ENCODE measurements at regions of chr1 and their contacts with region 1.

Region 1: GRCh38 chr1:201408176-201408833 is 9.2 kb upstream of the LAD1 start:
- DNase-seq: peak; percentile 85
- CTCF ChIP-seq: peak; percentile 95

Region 2: DNA sequence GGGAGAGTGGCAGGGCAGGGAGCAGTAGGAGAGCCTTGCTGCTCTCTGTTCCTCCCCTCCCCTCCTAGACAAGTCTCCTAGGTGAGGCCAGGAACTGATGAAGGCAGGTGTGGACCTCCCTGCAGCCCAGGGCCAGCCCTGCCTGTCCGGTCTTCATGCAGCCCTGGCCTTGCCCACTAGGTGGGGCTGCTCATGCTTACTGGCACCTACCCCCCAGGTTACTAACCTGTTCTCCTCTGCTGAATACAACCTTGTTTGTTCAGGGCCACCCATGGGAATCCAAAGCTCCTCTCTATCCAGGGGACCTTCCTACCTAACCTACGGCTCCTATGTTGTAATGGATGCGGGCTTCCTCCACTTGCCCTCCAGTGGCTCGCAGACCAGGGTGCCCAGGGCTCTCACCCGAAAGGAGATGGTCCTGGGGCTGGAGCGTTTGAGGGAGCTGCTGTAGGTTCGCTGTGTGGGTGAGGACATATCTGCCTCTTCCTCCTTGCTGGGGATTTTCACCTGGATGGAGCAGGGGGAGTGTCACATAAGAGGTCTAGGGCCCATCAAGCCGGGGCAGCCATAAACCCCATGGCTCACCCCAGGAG is 22.9 kb before region 1 on chr1:
- CTCF ChIA-PET with region 1: interaction called, 95 read pairs
- POLR2A ChIA-PET with region 1: no interaction called
- DNase-seq: peak; percentile 85
- CTCF ChIP-seq: peak; percentile 87

Region 3: DNA sequence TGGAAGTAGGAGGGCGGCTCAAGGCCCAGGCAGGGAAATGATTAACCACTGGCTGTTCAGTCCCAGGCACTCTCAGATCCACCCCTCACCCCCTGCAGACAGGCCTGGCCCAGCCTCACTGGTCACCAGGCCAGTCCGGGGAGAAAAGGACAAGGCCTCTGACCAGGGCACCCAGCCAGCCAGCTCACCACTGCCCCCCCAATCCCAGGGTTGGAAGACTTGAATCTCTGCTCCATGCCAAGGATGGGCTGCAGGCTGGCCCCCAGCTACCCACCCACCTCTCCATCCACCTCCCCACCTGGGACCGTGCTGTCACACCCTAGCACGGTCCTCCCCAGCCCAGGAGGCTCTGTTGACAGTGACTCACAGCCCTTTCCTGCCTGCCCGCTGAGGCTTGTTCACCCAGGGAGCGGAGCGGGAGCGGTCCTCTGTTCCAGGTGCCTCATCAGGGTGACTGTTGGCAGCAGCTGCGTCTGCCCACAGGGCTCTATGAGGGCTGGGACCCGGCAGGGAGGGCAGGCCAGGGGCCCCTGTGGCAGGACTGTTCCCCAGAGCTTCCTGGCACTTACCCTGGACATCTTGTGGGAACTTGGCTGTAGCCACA is 11.3 kb before region 1 on chr1:
- CTCF ChIA-PET with region 1: interaction called, 95 read pairs
- POLR2A ChIA-PET with region 1: no interaction called
- DNase-seq: no peak
- CTCF ChIP-seq: no peak

Measured in GM10248 (cell line).